ENCODE measurements at regions of chr7 and their contacts with region 1.

Region 1: GRCh38 chr7:132250883-132251653 is 325.2 kb downstream of the PLXNA4 start:
- DNase-seq: peak; percentile 62 to 89
- ATAC-seq: peak; percentile 59 to 84
- H3K4me3 ChIP-seq: no peak overlapping the region
- H3K27ac ChIP-seq: peak overlapping the region in 2 of 4 donors; percentile 24 to 52
- H3K4me1 ChIP-seq: peaks cover 8 to 15% of the 10 kb centered on the region in 2 donors
- H3K27me3 ChIP-seq: no peaks in the 10 kb centered on the region
- CTCF ChIP-seq: no peak
- POLR2A ChIP-seq: no peak

Region 2: DNA sequence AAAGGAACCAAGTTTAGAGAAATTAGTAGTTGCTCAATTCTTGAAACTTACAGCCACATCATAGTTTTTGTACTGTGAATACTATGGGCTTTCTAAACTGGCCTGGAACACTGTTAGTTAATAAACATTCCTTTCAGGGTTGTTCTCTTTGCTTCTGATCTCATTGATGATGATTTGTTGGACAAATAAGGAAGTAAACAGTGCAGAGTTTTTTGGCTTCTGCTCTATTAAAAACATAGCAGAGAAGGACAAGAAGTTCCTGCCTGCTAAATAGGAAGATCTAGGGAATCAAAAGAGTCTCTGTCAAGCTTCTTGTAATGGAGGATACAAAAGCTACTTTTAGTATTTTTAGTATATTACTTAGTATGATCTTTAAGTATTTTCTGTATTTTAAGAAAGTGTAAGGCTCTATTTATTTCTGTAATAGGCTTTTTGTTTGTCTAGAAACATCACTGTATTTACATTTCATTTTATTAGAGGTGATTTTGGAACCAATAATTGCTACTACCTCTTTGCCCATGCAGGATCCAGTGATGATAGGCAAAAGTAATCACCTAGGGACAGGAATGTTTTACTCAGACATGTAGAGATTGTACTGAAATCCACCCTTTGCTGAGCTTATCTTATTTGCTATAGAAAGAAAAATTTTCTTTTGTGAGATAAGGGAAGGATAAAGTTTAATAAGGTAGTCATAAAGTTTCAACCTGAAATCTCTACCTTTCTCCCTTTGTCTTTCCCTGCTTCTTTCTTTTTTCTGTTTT is 850.1 kb before region 1 on chr7:
- in situ Hi-C with region 1: no loop called
- intact Hi-C with region 1: no loop called
- DNase-seq: no peak
- ATAC-seq: peak; percentile 49 to 85
- H3K4me3 ChIP-seq: no peak overlapping the region
- H3K27ac ChIP-seq: peak overlapping the region; percentile 55 to 77 (median 64)
- H3K4me1 ChIP-seq: peaks cover 19 to 20% of the 10 kb centered on the region in 2 donors
- H3K27me3 ChIP-seq: no peaks in the 10 kb centered on the region
- CTCF ChIP-seq: no peak
- POLR2A ChIP-seq: no peak

Region 3: GRCh38 chr7:131945313-131945911 is 305.7 kb before region 1 on chr7:
- in situ Hi-C with region 1: loop called in 1 of 4 experiments (anchors 25 kb)
- intact Hi-C with region 1: loop called (anchors 1 kb)
- DNase-seq: no peak
- ATAC-seq: peak; percentile 33 to 55
- H3K4me3 ChIP-seq: peak overlapping the region; percentile 23 to 46 (median 36)
- H3K27ac ChIP-seq: no peak overlapping the region
- H3K4me1 ChIP-seq: peaks cover 8 to 9% of the 10 kb centered on the region in 2 donors
- H3K27me3 ChIP-seq: no peaks in the 10 kb centered on the region
- CTCF ChIP-seq: peak; percentile 77 to 93 (median 85)
- POLR2A ChIP-seq: no peak

Region 4: DNA sequence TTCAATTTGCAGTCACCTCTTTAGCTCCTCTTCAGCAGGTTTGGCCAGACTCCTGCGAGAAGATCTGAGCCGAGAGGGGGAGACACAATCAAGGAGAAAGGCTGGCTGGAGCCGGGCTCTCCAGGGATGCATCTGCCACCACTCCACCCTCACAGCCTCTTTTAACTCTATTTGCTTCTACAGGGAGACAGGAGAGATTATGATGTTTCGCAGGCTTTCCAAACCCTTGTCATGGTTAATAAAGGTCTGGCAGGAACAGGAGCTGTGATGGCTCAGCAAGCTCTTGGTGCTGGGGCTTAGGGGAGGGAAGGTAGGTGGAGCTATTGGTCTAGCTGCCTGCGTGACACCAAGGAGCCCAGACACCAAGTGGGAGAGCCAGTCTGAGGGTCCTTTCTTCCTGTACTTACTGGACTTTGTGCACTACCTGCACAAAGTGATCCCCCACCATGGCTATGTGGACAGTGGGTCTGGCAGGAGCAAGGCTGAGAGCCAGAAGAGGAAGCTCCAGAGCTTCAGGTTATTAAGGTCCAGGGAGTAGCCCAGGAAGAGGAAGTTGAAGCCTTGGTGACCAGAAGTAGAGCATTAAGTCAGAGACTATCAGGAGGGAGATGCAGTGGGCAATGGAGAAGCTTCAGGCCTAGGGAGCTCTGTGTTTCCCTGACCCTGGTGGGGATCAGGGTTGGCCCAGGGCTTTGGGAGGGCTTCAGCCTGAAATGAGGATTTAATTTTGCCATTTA is 246.4 kb before region 1 on chr7:
- in situ Hi-C with region 1: no loop called
- intact Hi-C with region 1: loop called (anchors 1 kb)
- DNase-seq: peak in 1 of 2 donors; percentile 37
- ATAC-seq: peak; percentile 45 to 78
- H3K4me3 ChIP-seq: no peak overlapping the region
- H3K27ac ChIP-seq: no peak overlapping the region
- H3K4me1 ChIP-seq: no peaks in the 10 kb centered on the region
- H3K27me3 ChIP-seq: no peaks in the 10 kb centered on the region
- CTCF ChIP-seq: peak in 4 of 5 experiments; percentile 17 to 38 (median 30)
- POLR2A ChIP-seq: no peak

Region 5: GRCh38 chr7:132065193-132065988 is 185.7 kb before region 1 on chr7:
- in situ Hi-C with region 1: no loop called
- intact Hi-C with region 1: loop called (anchors 5 kb)
- DNase-seq: peak; percentile 75 to 83
- ATAC-seq: peak; percentile 90 to 95
- H3K4me3 ChIP-seq: no peak overlapping the region
- H3K27ac ChIP-seq: peak overlapping the region; percentile 79 to 95 (median 88)
- H3K4me1 ChIP-seq: peaks cover 51 to 53% of the 10 kb centered on the region in 2 donors
- H3K27me3 ChIP-seq: no peaks in the 10 kb centered on the region
- CTCF ChIP-seq: no peak
- POLR2A ChIP-seq: no peak

Region 6: DNA sequence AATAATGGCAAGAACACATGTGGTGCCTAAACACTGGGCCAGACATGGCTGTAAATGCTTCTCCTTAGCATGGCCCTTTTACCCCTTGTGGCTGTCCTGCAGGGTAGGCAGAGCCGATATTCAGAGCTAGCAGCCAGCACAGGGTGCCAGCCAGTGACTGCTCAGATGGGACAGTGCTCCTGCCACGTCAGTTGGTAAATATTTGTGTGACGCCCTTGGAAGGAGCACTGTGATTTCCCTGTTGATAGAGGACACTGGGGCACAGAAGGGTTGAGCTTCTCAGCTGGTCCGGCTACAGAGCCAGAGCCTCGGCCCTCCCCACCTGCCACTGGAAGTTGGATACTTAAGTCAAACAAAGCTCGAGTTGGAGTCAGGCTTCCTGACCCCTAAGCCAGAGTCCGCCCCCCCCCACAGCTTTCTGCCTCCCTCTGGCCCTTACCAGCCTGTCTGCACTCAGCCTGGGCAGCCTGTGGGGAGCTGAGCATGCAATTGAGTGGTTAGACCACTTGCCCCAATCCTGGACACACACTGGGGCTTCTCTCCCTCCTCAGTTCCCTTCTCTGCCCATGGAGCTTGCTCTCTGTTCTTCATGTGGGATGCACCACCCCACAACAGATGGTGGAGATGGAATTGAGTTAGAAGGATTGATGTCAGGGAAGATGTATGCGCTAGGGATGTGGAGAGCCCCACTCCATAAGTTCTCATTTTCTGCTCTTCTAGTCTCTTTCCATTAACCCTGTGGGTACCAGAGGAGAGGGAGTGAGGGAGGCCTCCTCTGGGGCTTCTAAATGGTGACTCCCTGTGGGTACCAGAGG is 25.6 kb before region 1 on chr7:
- in situ Hi-C with region 1: no loop called
- intact Hi-C with region 1: loop called (anchors 2 kb)
- DNase-seq: peak in 1 of 2 donors; percentile 45
- ATAC-seq: peak; percentile 37 to 77
- H3K4me3 ChIP-seq: no peak overlapping the region
- H3K27ac ChIP-seq: peak overlapping the region in 2 of 4 donors; percentile 54 to 59
- H3K4me1 ChIP-seq: no peaks in the 10 kb centered on the region
- H3K27me3 ChIP-seq: no peaks in the 10 kb centered on the region
- CTCF ChIP-seq: no peak
- POLR2A ChIP-seq: no peak